Right ventricle myocardium inferior (tissue), 1 donor: ENCODE measurements at regions of chr10 and their contacts with region 1.

Region 1: GRCh38 chr10:15901889-15902288 is 41.6 kb upstream of the MINDY3 start:
- DNase-seq: no peak
- ATAC-seq: no peak

Region 2: DNA sequence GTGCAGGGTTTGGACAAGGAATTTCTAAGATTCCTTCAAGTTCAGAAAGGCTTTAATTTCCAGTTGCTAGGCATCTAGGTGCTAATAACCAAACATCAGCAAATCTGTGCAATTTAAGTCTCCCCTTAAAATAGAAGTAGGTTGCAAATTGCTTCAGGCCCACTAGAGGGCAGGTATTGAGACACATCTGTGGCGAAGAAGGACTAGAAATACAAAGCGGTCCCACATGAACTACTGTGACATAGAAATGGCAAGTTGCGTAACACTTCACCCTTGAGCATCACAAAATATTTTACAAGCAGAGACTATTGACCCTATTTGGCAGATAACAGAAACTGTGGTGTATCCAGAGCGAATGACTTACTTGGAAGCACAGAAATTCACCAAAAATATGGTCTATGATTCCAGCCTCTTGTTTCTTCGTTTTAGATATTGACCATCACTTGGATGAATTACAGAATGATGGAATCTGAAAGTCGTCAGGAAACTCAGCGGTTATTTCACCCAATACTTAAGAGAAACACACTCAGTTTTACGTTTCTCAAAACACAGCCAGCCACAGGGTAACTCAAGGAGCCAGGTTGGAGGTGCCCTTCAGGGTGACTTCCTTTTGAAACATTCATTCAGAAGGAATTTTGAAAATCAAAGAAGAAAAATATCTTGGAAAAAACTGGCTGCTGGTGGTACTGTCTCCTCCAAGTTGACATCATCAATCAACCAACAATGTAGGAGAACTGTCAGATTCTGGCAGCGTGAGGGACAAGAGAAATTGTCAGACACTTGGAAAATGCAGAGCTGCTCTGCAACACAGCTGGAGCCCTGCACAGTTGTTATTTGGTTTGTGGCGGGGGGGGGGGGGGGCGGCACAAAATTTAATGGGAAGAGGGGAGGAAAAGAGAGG is 214.8 kb after region 1 on chr10:
- intact Hi-C with region 1: no loop called
- DNase-seq: no peak
- ATAC-seq: no peak

Region 3: DNA sequence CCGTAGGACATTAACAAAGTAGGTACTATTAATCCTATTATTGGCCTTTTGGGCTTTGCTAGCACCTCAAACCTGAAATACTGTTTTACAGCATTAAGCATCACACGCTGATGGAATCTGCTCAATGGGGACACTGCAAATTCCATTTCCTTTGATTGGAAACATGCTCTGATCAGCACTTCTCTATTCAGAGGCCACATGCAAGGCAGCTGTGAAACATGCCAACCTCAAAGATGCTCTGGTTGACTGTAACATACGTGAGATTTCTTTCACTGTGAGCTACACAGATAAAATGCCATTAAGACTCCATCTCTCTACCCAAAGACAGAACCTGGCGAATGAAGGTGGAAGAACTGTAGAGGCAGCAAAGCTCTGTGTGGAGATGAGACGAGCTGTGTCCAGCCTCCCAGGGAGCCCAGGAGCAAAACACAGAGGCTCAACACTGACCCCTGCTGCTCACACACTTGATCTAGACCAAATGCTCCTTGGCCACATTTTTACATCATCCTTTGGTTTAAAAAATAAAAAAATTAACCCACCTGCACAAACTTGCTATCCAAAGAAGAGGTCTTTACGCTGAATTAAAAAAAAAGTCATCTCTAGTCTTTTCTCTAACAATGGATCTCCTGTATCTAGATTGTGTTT is 907.3 kb after region 1 on chr10:
- intact Hi-C with region 1: loop called (anchors 5 kb)
- DNase-seq: no peak
- ATAC-seq: peak; percentile 36